ENCODE measurements at regions of chr1 and their contacts with region 1.

Region 1: GRCh38 chr1:89820422-89821321 is at the start of gene LRRC8D:
- H3K4me3 Mint-ChIP-seq: peak within 1 kb of the TSS; percentile 76
- H3K27ac Mint-ChIP-seq: peak within 1 kb of the TSS; percentile 98
- H3K4me1 Mint-ChIP-seq: peaks cover 59% of the 10 kb centered on the region
- H3K27me3 Mint-ChIP-seq: no peaks in the 10 kb centered on the region

Region 2: DNA sequence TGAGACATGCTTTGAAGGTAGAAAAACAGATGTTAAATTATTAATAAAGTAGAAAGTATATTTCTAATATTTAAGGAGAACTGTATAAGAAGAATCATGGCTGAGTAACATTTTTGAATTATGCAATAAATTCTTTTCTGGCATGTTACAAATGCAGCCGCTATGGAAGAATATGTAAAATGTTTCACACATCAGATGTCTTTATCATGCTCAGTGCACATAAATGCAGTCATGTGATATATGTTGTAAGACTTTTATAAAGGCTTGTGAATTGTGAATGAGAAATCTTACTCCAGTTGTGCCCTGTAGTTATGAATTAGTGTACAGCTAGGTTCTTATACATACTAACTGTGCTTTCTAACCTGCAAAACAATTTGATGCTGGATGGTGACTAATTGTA is 242.5 kb before region 1 on chr1:
- intact Hi-C with region 1: no loop called
- H3K4me3 Mint-ChIP-seq: no peak overlapping the region
- H3K27ac Mint-ChIP-seq: no peak overlapping the region
- H3K4me1 Mint-ChIP-seq: peaks cover 12% of the 10 kb centered on the region
- H3K27me3 Mint-ChIP-seq: no peaks in the 10 kb centered on the region

Region 3: DNA sequence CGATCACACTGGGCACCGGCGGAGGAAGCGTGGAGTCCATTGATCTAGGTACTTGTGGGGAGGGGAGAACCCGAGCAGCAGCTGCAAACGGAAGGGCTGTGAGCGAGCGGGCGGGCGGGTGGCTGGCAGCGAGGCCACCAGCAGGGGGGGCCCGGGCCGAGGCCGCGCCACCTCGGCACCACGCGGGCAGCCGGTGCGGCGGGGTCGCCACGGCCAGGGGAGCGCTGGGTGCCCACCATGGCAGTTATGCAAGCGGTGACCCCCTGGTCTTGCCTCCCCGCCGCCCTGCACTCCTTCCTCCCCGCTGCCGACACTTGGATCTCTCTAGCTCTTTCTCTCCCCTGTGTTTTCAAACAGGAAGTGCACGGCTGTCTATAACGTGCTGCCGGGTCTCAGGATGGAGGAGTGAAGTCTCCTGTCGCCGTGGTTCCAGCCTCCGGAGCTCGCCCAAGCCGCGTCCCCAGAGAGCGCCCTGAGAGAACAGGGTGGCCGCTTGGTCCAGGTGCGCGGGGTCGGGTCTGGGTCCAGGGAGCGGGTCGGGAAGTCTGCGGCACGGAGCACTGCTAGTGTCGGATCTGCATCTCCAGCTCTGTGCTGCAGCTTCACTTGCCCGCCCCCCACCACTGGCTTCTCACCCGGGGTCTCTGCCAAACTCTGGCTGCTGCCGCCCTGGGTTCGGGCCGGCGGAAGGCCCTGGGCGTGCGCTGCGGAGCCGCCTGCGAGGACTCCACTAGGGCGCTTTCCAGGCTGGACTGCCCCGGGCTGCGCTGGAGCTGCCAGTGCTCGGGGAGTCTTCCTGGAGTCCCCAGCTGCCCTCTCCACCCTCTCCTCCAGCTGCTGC is 22.8 kb after region 1 on chr1:
- intact Hi-C with region 1: loop called (anchors 1 kb)
- H3K4me3 Mint-ChIP-seq: peak overlapping the region; percentile 90
- H3K27ac Mint-ChIP-seq: peak overlapping the region; percentile 86
- H3K4me1 Mint-ChIP-seq: peaks cover 34% of the 10 kb centered on the region
- H3K27me3 Mint-ChIP-seq: no peaks in the 10 kb centered on the region

Region 4: DNA sequence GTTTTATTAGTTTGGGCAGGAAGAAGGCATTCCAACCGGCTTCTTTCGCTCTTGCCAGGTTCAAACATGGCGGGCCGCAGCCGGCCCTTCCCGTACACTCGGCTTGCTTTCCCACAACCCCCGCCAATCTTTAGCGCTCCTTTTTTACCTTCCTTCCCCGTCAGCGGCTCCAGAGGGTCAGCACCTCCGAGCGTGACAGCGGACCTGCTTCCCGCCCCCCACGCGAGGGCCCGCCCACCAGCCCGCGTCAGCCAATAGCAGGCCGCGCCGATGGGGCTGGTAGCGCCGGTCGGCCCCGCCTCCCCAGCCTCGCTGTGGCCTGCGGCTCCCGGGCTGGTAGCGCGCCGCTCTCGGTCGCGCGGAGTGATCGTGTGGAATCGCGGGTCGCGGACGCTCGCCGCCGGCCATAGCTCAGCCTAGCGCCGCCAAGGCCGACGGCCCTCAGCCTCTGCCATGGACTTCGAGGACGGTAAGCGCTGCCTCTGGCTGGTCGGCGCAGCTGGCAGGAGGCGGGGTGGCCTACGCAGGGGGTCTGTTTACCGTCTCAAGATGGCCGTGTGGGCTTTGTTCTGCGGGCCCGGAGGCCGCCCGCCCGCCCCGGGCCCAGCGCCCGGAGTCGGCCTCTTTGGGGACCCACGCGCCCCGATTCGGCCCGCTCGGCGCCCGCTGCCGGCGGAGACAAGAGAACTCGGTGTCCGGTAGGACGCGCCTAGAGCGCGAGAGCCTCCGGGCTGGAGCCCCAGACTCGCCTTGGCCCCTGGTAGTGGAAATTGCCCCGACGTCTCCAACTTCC is 174.3 kb after region 1 on chr1 and contains the start of gene ZNF326:
- intact Hi-C with region 1: loop called (anchors 1 kb)
- H3K4me3 Mint-ChIP-seq: peak within 1 kb of the TSS; percentile 89
- H3K27ac Mint-ChIP-seq: peak within 1 kb of the TSS; percentile 96
- H3K4me1 Mint-ChIP-seq: peaks cover 25% of the 10 kb centered on the region
- H3K27me3 Mint-ChIP-seq: no peaks in the 10 kb centered on the region